T-cell (primary cell): ENCODE measurements at regions of chr11 and their contacts with region 1.

Region 1: DNA sequence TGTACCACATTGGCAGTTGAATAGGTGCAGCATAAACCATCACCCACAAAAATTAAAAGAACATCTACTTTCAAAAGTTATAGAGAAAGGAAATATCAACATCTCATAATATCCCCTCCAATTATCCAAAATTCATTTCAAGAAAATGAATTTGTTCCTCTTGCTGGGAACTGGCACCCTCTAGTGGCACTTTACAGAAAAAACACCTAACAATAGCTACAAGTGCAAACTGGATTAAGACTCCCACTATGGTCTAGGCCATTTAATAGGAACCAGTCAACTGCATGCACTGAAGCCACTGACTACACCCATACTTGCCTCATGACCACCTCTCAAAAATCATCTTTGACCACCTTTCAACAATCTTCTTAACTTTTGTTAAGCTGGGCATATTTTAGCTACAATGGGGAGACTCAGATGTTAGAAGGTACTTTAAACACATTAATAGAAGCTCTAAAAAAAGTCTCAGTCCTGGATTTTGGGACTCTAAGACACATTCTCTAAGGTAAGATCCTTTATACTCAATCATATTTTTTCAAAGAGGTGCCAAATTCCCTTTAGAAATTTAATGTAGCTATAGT is 17.3 kb downstream of the TRAF6 start:
- DNase-seq: peak in 9 of 35 experiments; percentile 8 to 77 (median 22)
- ATAC-seq: peak in 3 of 4 experiments; percentile 40 to 52 (median 46)
- H3K4me3 ChIP-seq: no peak overlapping the region
- H3K4me3 Mint-ChIP-seq: no peak overlapping the region
- H3K27ac ChIP-seq: no peak overlapping the region
- H3K27ac Mint-ChIP-seq: peak overlapping the region; percentile 34 to 40
- H3K4me1 ChIP-seq: peaks cover 2 to 5% of the 10 kb centered on the region in 2 experiments
- H3K4me1 Mint-ChIP-seq: peaks cover 17 to 24% (median 20%) of the 10 kb centered on the region in 3 donors
- H3K27me3 ChIP-seq: no peaks in the 10 kb centered on the region
- H3K27me3 Mint-ChIP-seq: no peaks in the 10 kb centered on the region

Region 2: GRCh38 chr11:35822815-35823495 is 669.9 kb before region 1 on chr11:
- CTCF ChIA-PET with region 1: interaction called, 7 to 14 read pairs
- POLR2A ChIA-PET with region 1: no interaction called
- DNase-seq: no peak
- ATAC-seq: no peak
- H3K4me3 ChIP-seq: no peak overlapping the region
- H3K4me3 Mint-ChIP-seq: no peak overlapping the region
- H3K27ac ChIP-seq: no peak overlapping the region
- H3K27ac Mint-ChIP-seq: no peak overlapping the region
- H3K4me1 ChIP-seq: peaks cover 0 to 8% of the 10 kb centered on the region in 2 experiments
- H3K4me1 Mint-ChIP-seq: peaks cover 7 to 20% (median 19%) of the 10 kb centered on the region in 3 donors
- H3K27me3 ChIP-seq: peaks cover 0 to 5% of the 10 kb centered on the region in 2 experiments
- H3K27me3 Mint-ChIP-seq: no peaks in the 10 kb centered on the region

Region 3: DNA sequence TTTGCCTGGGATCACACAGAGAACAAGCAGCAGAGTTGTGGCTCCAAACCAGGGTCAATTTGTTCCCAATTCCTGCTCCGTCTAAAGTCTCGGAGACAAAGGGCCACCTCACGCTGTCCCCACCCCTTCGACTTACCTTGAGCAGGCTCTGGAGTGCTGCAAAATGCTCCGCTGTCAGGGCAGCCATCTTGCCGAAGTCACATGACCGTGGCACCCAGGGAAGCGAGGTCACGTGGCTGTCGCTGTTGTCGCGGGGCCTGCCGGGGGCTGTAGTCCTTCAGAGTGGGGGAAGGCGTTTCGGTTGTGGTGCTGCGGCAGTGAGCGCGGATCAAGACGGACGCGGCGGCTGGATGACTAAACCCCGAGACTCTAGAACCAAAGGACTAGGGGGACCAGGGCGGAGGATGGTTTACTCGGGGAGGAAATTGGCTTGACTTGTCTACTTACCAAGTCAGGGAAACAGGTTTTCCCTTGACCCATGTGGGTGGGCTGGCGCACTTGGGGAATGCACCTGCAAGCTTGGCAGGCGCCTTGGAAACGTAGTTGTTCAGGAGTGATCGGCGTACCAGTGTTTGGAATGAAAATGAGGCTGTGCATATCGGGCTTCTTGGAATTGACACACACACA is 203.5 kb before region 1 on chr11 and contains the start of gene COMMD9:
- CTCF ChIA-PET with region 1: interaction called, 9 to 91 read pairs
- POLR2A ChIA-PET with region 1: interaction called in 1 of 2 experiments, 3 read pairs
- DNase-seq: peak; percentile 84 to 97 (median 92)
- ATAC-seq: peak; percentile 98 to 99 (median 98)
- H3K4me3 ChIP-seq: peak within 1 kb of the TSS; percentile 67 to 93
- H3K4me3 Mint-ChIP-seq: peak within 1 kb of the TSS; percentile 84 to 94 (median 94)
- H3K27ac ChIP-seq: peak within 1 kb of the TSS; percentile 15
- H3K27ac Mint-ChIP-seq: peak within 1 kb of the TSS; percentile 88 to 93
- H3K4me1 ChIP-seq: peaks cover 5 to 13% of the 10 kb centered on the region in 2 experiments
- H3K4me1 Mint-ChIP-seq: peaks cover 43 to 56% (median 49%) of the 10 kb centered on the region in 3 donors
- H3K27me3 ChIP-seq: no peaks in the 10 kb centered on the region
- H3K27me3 Mint-ChIP-seq: no peaks in the 10 kb centered on the region
- total RNA-seq, gene COMMD9: 37.8 to 48.0 (median 40.3) TPM

Region 4: DNA sequence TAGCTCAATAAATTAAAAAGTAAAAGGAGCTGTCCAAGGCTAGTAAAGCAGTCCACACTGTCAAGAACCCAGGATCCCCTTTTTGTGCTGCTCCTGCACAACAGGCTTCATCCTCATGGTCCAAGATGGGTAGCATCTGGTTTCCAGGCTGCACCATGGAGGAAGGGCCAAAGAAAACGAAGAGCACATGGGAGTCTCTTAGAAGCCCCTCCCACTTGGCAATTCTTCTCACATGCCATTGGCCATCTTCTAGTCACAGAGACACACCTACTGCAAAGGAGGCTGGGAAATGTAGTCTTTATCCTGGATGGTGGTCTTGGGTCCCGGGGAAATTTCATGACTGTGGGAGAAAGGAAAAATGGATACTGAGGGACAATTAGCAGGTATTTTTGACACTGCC is 158.9 kb before region 1 on chr11:
- CTCF ChIA-PET with region 1: no interaction called
- POLR2A ChIA-PET with region 1: no interaction called
- DNase-seq: no peak
- ATAC-seq: no peak
- H3K4me3 ChIP-seq: no peak overlapping the region
- H3K4me3 Mint-ChIP-seq: no peak overlapping the region
- H3K27ac ChIP-seq: no peak overlapping the region
- H3K27ac Mint-ChIP-seq: no peak overlapping the region
- H3K4me1 ChIP-seq: no peaks in the 10 kb centered on the region
- H3K4me1 Mint-ChIP-seq: no peaks in the 10 kb centered on the region
- H3K27me3 ChIP-seq: peaks cover 0 to 3% of the 10 kb centered on the region in 2 experiments
- H3K27me3 Mint-ChIP-seq: peaks cover 0 to 10% of the 10 kb centered on the region in 2 donors

Region 5: GRCh38 chr11:36354221-36355003 is 138.4 kb before region 1 on chr11:
- CTCF ChIA-PET with region 1: interaction called in 1 of 2 experiments, 22 read pairs
- POLR2A ChIA-PET with region 1: no interaction called
- DNase-seq: no peak
- ATAC-seq: no peak
- H3K4me3 ChIP-seq: no peak overlapping the region
- H3K4me3 Mint-ChIP-seq: no peak overlapping the region
- H3K27ac ChIP-seq: no peak overlapping the region
- H3K27ac Mint-ChIP-seq: no peak overlapping the region
- H3K4me1 ChIP-seq: peaks cover 3 to 14% of the 10 kb centered on the region in 2 experiments
- H3K4me1 Mint-ChIP-seq: peaks cover 21 to 72% (median 28%) of the 10 kb centered on the region in 3 donors
- H3K27me3 ChIP-seq: no peaks in the 10 kb centered on the region
- H3K27me3 Mint-ChIP-seq: peaks cover 13 to 21% of the 10 kb centered on the region in 2 donors

Region 6: DNA sequence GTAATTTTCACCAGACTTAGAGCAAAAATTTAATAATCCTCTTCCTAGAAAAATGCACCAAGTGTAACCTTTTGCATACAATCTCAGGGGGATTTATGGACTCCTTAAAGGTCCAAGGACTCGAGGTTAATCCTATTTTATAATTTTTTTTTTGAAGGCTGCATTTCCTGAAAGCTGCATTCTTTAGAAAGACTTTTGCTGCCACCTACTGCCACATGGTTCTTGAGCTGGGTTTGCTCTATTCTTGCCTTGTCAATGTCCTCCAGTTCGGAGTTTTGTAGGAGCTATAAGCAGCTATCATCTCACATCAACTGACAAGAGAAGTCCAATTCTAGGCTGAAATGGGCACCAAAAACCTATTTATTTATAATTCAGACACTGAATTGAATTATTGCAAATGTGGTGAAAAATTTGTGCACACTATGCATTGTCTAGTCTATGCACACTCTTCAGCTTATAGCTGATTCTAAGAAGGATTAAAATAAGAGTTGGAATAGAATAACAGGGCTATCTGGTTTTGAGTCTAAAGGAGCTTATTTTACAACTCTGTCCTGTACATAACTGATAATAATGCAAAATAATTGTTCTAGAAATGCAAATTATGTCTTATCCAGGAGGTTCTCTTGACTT is 14.0 kb before region 1 on chr11:
- CTCF ChIA-PET with region 1: interaction called, 5 to 36 read pairs
- POLR2A ChIA-PET with region 1: interaction called in 1 of 2 experiments, 3 read pairs
- DNase-seq: peak in 14 of 35 experiments; percentile 8 to 65 (median 17)
- ATAC-seq: no peak
- H3K4me3 ChIP-seq: no peak overlapping the region
- H3K4me3 Mint-ChIP-seq: no peak overlapping the region
- H3K27ac ChIP-seq: no peak overlapping the region
- H3K27ac Mint-ChIP-seq: no peak overlapping the region
- H3K4me1 ChIP-seq: peaks cover 0 to 4% of the 10 kb centered on the region in 2 experiments
- H3K4me1 Mint-ChIP-seq: peaks cover 0 to 6% (median 5%) of the 10 kb centered on the region in 3 donors
- H3K27me3 ChIP-seq: no peaks in the 10 kb centered on the region
- H3K27me3 Mint-ChIP-seq: no peaks in the 10 kb centered on the region

Region 7: DNA sequence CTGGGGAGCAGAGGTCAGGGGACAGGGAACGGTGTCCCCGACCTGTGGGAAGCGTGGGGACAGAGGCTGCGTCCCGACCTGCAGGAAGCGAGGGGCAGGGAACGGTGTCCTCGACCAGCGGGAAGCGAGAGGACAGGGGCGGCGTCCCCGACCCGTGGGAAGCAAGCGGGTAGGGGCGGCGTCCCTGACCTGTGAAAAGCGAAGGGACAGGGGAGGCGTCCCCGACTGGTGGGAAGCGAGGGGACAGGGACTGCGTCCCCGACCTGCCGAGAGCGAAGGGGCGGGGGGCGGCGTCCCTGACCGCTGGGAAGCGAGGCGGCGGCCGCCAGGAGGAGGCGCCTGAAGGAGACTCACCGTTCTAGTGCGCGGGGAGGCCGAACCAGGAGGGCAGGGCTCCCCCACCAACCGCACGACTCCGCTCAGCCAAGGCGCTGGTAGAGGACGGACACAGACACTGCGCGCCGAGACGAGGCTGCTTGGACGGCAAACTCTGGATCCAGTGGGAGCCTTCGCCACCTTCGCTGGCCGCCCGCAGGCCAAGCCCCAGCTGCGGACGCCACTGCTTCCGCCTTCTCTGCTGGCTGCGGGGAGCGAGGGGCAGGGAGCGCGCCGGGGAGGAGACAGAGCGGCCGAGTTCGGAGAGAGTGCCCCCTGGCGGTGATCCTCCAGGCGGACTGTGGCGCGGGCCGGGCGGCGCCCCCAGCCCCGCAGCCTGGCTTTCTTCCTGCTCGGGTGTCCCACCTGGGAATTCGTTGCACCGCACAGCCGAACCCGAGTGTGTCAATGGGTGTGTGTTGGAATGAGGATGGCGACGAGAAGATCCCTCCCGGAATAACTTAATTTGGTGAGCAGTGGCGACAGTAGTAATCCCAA is 17.1 kb after region 1 on chr11 and contains the start of gene TRAF6:
- CTCF ChIA-PET with region 1: interaction called, 11 to 22 read pairs
- POLR2A ChIA-PET with region 1: interaction called in 1 of 2 experiments, 6 read pairs
- DNase-seq: peak; percentile 62 to 93 (median 83)
- ATAC-seq: peak; percentile 95 to 97 (median 96)
- H3K4me3 ChIP-seq: peak within 1 kb of the TSS; percentile 95 to 97
- H3K4me3 Mint-ChIP-seq: peak within 1 kb of the TSS; percentile 89 to 97 (median 97)
- H3K27ac ChIP-seq: peak within 1 kb of the TSS; percentile 77
- H3K27ac Mint-ChIP-seq: peak within 1 kb of the TSS; percentile 91 to 94
- H3K4me1 ChIP-seq: peaks cover 0 to 18% of the 10 kb centered on the region in 2 experiments
- H3K4me1 Mint-ChIP-seq: peaks cover 38 to 45% (median 38%) of the 10 kb centered on the region in 3 donors
- H3K27me3 ChIP-seq: no peaks in the 10 kb centered on the region
- H3K27me3 Mint-ChIP-seq: peaks cover 10 to 13% of the 10 kb centered on the region in 2 donors
- total RNA-seq, gene TRAF6: 17.3 to 26.0 (median 19.4) TPM